K562 (cell line): ENCODE measurements at regions of chr9 and their contacts with region 1.

Region 1: GRCh38 chr9:73143606-73144328 is 7.9 kb upstream of the ANXA1 start:
- DNase-seq: peak in 2 of 4 experiments; percentile 51 to 77
- ATAC-seq: peak; percentile 67
- H3K4me3 ChIP-seq: no peak overlapping the region
- H3K27ac ChIP-seq: peak overlapping the region; percentile 69
- H3K4me1 ChIP-seq: peaks cover 3 to 46% of the 10 kb centered on the region in 2 experiments; a peak in 4 of 5 replicates
- H3K27me3 ChIP-seq: no peaks in the 10 kb centered on the region
- CTCF ChIP-seq: no peak
- EP300 ChIP-seq: peak; percentile 89
- POLR2A ChIP-seq: no peak
- RAD21 ChIP-seq: peak in 1 of 2 experiments; percentile 5; a peak in 1 of 4 replicates

Region 2: GRCh38 chr9:73132034-73132776 is 11.6 kb before region 1 on chr9:
- CTCF ChIA-PET with region 1: no interaction called
- POLR2A ChIA-PET with region 1: interaction called, 11 read pairs
- in situ Hi-C with region 1: no loop called
- intact Hi-C with region 1: no loop called
- DNase-seq: peak in 2 of 4 experiments; percentile 29 to 70
- ATAC-seq: peak; percentile 82
- H3K4me3 ChIP-seq: peak overlapping the region; percentile 33
- H3K27ac ChIP-seq: peak overlapping the region; percentile 85
- H3K4me1 ChIP-seq: peaks cover 0 to 25% of the 10 kb centered on the region in 2 experiments; a peak in 3 of 5 replicates
- H3K27me3 ChIP-seq: no peaks in the 10 kb centered on the region
- CTCF ChIP-seq: no peak
- EP300 ChIP-seq: no peak
- POLR2A ChIP-seq: peak; percentile 57
- RAD21 ChIP-seq: no peak

Region 3: DNA sequence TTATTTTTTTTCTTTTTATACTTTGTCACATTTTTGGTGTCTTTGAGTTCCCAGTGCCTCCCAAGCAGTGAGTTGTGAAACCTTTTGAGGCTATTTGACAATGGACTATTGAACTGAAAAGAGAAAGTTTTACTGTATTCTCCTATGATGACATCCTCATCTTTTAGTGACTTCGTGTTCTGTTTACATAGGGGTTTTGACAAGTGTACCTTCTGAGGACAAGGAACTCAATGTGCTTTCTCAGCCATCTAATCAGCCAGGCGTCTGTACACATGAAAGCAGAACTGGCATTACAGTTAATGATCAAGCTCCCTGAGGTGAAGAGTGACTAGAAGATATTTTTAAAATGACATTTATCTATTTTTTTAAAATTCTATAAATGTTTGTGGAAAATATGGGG is 183.4 kb after region 1 on chr9:
- CTCF ChIA-PET with region 1: no interaction called
- POLR2A ChIA-PET with region 1: no interaction called
- in situ Hi-C with region 1: no loop called
- intact Hi-C with region 1: no loop called
- DNase-seq: no peak
- ATAC-seq: no peak
- H3K4me3 ChIP-seq: no peak overlapping the region
- H3K27ac ChIP-seq: no peak overlapping the region
- H3K4me1 ChIP-seq: no peaks in the 10 kb centered on the region
- H3K27me3 ChIP-seq: no peaks in the 10 kb centered on the region
- CTCF ChIP-seq: no peak
- EP300 ChIP-seq: no peak
- POLR2A ChIP-seq: no peak
- RAD21 ChIP-seq: no peak